ENCODE measurements at regions of chr17 and their contacts with region 1.

Region 1: GRCh38 chr17:76397687-76398487 is 13.5 kb downstream of the SPHK1 start:
- DNase-seq: peak; percentile 91
- H3K4me3 Mint-ChIP-seq: no peak overlapping the region
- H3K27ac Mint-ChIP-seq: no peak overlapping the region
- H3K4me1 Mint-ChIP-seq: no peaks in the 10 kb centered on the region
- H3K27me3 Mint-ChIP-seq: no peaks in the 10 kb centered on the region

Region 2: DNA sequence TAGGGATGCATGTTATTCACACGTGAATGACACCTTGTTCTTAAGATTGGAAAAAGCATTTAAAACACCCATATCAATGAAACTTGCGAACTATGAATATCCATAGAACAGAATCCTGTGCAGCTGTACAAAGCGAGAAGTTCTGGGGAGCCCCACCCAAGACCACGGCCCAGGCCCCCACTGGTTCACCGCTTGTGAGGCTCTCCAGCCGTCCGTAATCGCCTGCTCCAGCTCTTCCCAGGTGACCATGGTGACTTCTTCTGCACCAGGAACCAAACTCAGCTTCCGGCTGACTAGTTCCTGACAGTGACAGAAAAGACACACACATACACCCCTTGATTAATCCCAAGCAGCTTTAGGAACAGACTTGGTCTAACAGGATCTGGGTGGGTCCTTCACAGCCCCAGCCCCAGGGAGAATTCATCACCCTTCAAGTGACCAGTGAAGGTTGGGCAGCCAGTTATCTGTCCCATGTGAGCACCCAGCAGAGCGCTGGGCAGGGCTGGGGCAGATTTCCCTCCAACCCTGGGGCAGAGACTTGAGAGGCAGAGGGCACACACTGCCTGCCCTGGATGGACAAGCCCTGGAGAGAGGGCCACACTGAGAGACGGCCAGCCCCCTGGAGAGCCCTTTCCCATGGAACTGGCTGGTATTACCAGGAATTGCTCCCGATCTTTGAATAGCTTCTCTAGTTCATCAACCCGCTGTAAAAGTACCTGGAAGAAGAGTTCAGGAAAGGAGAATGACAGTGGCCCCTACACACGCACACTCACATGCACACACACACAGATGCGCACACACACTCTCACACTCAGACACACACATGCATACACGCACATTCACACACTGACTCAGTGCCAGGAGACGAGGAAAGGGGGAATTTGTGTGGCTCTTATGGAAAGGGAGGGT is 93.4 kb before region 1 on chr17:
- CTCF ChIA-PET with region 1: interaction called, 48 read pairs
- POLR2A ChIA-PET with region 1: no interaction called
- DNase-seq: no peak
- H3K4me3 Mint-ChIP-seq: no peak overlapping the region
- H3K27ac Mint-ChIP-seq: no peak overlapping the region
- H3K4me1 Mint-ChIP-seq: peaks cover 1% of the 10 kb centered on the region
- H3K27me3 Mint-ChIP-seq: no peaks in the 10 kb centered on the region

Region 3: DNA sequence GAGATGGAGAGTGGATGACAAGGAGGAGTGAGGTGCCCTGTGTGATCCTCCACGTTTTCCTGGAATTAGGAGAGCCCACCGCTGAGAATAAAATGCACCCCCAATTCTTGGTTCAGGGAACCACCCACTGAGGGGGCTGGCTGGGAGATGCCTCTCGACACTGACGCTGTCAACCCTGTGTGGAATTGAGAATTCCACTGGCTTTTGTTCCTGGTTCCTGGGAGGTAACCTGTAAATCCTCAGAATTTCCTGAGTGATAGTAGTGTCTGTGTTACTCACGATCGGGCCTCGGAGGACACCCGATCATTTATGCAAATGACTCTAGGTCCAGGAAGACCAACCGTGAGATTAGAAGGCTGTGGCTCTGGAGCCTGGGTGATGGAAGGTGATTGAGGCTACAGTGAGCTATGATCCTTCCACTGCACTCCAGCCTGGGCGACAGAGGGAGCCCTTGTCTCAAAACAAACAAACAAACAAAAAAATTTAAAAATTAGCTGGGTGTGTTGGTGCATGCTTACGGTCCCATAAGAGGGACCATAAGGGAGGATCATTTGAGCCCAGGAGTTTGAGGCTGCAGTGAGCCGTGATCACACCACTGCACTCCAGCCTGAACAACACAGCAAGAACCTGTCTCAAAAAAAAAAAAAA is 32.5 kb before region 1 on chr17:
- CTCF ChIA-PET with region 1: interaction called, 10 read pairs
- POLR2A ChIA-PET with region 1: no interaction called
- DNase-seq: no peak
- H3K4me3 Mint-ChIP-seq: no peak overlapping the region
- H3K27ac Mint-ChIP-seq: no peak overlapping the region
- H3K4me1 Mint-ChIP-seq: peaks cover 2% of the 10 kb centered on the region
- H3K27me3 Mint-ChIP-seq: peaks cover 4% of the 10 kb centered on the region

Region 4: GRCh38 chr17:76408052-76408849 is 10.4 kb after region 1 on chr17:
- CTCF ChIA-PET with region 1: interaction called, 19 read pairs
- POLR2A ChIA-PET with region 1: interaction called, 4 read pairs
- DNase-seq: peak; percentile 79
- H3K4me3 Mint-ChIP-seq: no peak overlapping the region
- H3K27ac Mint-ChIP-seq: no peak overlapping the region
- H3K4me1 Mint-ChIP-seq: peaks cover 6% of the 10 kb centered on the region
- H3K27me3 Mint-ChIP-seq: no peaks in the 10 kb centered on the region

Region 5: GRCh38 chr17:76506408-76507349 is 108.8 kb after region 1 on chr17:
- CTCF ChIA-PET with region 1: interaction called, 13 read pairs
- POLR2A ChIA-PET with region 1: no interaction called
- DNase-seq: peak; percentile 90
- H3K4me3 Mint-ChIP-seq: no peak overlapping the region
- H3K27ac Mint-ChIP-seq: peak overlapping the region; percentile 64
- H3K4me1 Mint-ChIP-seq: peaks cover 45% of the 10 kb centered on the region
- H3K27me3 Mint-ChIP-seq: peaks cover 7% of the 10 kb centered on the region